Activated naive CD4-positive, alpha-beta T cell treated with anti-CD3 and anti-CD28 coated beads for 36 hours (primary cell): ENCODE measurements at regions of chr7 and their contacts with region 1.

Region 1: DNA sequence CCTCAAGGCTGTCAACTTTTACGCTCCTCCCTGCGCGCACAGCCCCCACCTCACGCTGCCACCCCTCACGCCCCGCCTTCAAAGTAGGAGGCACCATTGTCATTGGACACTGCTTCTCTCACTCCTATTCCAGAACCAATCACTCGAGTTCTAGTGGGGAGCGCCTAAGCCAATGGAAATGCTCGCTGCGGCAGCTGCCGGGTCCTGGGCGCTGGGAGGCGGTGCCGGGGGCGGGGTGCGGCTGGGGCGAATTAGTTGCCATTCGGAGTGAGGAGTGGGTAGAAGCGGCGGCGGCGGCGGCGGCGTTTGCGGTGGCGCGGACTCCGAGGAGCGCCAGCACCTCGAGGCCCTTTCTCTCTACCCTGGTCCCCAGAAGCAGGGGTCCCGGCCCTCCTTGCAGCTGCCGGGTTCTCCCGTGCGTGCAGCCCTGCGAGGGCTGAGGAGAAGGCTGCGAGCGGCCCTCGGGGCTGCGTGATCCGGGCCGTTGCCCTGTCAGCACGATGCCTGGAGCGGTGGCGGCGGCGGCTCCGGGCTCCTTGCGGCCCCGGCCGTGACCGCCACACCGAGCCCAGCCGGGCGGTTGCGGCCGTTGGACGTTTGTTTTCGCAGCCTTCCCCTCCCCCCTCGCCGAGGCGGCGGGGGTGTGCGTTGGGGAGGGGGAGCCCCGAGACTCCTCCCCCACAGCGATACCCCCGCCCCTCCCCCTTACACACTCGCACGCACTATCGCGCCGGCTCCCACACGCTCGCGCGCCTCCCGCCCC is at the start of gene GLCCI1:
- DNase-seq: peak; percentile 98
- H3K4me3 Mint-ChIP-seq: peak within 1 kb of the TSS; percentile 90
- H3K27ac Mint-ChIP-seq: peak within 1 kb of the TSS; percentile 92
- H3K4me1 Mint-ChIP-seq: peaks cover 29% of the 10 kb centered on the region
- H3K27me3 Mint-ChIP-seq: no peaks in the 10 kb centered on the region
- total RNA-seq, gene GLCCI1: 12.9 to 13.3 TPM

Region 2: DNA sequence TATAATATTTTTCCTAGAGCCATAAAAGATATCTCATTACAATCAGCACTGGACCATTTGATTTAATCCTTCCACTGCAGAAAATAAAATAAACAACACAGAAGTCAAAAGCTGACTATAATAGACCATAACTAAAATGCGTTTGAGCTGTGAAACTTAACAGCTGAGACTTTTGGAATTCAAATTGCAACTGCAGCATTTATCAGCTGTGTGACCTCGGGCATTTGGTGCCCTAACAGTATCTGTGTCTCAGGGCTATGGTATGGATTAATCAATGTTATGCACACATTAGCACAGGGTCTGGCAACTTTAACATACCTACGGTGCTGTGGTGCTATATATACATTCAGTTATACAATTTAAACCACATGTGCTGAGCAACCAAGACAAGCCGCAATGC is 593.2 kb before region 1 on chr7:
- CTCF ChIA-PET with region 1: no interaction called
- intact Hi-C with region 1: no loop called
- DNase-seq: no peak
- H3K4me3 Mint-ChIP-seq: no peak overlapping the region
- H3K27ac Mint-ChIP-seq: no peak overlapping the region
- H3K4me1 Mint-ChIP-seq: no peaks in the 10 kb centered on the region
- H3K27me3 Mint-ChIP-seq: no peaks in the 10 kb centered on the region

Region 3: DNA sequence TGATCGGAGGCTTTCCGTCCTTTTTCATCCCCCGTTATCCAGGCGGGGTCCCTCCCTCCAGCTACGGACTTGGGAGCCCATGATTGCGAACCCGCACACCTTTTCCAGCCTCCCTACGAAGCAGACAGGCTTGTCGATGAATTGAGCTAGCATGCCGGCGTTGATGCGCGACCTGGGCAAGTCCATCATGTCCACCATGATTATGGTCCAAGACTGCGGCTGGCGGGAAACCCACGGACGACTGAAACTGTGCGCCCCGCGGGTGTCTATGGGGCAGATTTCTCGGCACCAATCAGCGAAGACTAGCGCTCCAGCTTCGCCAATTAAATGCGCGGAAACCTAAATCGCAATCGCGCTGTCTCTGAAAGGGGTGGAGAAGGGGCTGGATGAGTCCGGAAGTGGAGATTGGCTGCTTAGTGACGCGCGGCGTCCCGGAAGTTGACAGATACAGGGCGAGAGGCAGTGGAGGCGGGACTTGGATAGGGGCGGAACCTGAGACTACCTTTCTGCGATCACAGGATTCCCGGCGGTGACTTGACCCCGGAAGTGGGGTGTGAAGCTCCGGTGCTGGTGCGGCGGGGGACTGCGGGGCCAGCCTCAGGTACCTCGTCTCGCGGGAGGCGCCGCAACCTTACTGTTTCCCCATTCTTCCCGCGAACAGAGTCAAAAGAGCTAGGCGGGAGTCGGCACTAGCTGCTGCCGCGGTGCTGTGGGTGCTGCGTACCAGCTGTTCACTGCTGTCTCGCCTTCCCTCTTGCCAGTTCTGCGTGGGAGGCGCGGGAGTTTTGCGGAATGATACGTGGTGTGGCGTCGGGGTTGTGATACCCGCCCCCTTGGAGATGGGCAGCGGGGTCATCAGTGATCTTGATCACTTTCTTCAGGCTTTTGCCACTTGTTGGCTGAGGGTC is 328.2 kb before region 1 on chr7 and contains the start of gene UMAD1:
- CTCF ChIA-PET with region 1: no interaction called
- intact Hi-C with region 1: loop called (anchors 1 kb)
- DNase-seq: peak; percentile 99
- H3K4me3 Mint-ChIP-seq: peak within 1 kb of the TSS; percentile 92
- H3K27ac Mint-ChIP-seq: peak within 1 kb of the TSS; percentile 98
- H3K4me1 Mint-ChIP-seq: peaks cover 41% of the 10 kb centered on the region
- H3K27me3 Mint-ChIP-seq: no peaks in the 10 kb centered on the region
- total RNA-seq, gene UMAD1: 13.8 to 14.3 TPM

Region 4: GRCh38 chr7:7772397-7772821 is 196.3 kb before region 1 on chr7:
- CTCF ChIA-PET with region 1: interaction called, 3 read pairs
- intact Hi-C with region 1: loop called (anchors 1 kb)
- DNase-seq: peak; percentile 53
- H3K4me3 Mint-ChIP-seq: peak overlapping the region; percentile 69
- H3K27ac Mint-ChIP-seq: no peak overlapping the region
- H3K4me1 Mint-ChIP-seq: peaks cover 28% of the 10 kb centered on the region
- H3K27me3 Mint-ChIP-seq: no peaks in the 10 kb centered on the region

Region 5: DNA sequence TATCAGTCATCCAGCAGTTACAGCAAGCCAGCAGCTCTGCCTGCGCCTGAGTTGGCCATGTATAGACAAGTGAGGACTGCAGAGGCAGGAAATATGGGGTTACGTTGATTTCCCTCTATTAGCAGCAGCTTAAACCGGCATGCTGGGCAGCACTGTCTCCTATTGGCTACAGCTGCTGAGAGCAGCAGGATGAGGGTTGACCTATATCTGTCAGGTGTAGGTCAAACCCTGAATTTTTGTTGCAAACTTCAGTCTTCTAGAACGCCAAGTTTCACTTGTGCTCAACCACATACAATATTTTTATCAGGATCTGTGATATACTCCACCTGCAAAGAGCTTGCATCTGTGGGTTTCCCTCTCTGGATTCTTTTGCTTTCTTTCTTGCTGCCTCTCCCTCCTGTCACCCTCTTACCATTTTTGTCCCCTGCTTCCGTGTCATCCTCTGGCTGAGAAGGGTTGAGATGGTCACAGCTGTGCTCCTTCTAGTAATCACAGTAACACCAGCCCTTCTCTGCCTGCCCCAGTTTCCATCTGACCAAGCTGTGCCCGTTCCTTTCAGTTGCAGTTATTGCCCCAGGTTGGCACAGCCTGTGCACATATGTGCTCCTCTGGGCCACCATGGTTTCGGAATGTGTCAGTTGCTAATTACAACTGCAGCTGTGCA is 24.0 kb before region 1 on chr7:
- CTCF ChIA-PET with region 1: no interaction called
- intact Hi-C with region 1: loop called (anchors 1 kb)
- DNase-seq: peak; percentile 75
- H3K4me3 Mint-ChIP-seq: peak overlapping the region; percentile 41
- H3K27ac Mint-ChIP-seq: peak overlapping the region; percentile 18
- H3K4me1 Mint-ChIP-seq: peaks cover 16% of the 10 kb centered on the region
- H3K27me3 Mint-ChIP-seq: no peaks in the 10 kb centered on the region

Region 6: DNA sequence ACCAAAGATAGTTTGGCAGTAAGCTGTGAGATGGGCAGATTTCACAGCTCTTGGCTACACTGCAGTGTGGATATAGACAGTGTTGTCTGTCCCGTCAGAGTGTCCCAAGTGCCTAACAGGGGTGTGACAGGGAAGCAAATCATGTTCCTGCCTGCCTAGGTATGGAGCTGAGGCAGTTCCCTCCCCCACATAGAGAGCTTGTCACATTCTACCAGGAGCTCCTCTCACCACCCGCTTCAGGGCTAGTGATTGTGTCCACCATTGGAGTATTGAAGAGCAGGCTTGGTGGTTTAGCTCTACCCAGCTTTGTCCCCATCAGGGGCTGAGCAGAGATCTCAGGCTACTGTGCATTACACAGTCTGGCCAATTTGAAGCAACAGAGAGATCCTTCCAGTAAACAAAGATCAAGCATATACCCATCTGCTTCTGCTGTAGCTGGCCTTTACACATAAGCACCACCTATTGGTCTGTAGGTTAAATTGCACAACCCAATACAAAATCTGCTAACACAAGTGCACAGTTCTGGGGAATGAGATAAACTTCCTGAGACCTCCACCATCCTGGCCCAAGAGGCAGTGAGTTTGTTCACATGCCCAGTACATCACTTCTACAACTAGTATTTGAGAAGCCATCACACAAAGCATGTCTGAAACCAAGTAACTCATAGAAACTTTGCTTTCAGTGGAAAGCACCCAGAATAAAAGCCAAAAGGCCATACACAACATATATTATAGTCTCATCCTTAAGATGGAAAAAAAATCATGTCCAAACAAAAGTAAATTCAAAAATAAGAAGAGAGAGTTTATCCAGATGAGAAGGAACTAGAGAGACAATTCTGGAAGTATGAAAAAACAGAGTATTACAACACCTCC is 67.2 kb after region 1 on chr7:
- CTCF ChIA-PET with region 1: interaction called, 4 read pairs
- intact Hi-C with region 1: loop called (anchors 1 kb)
- DNase-seq: no peak
- H3K4me3 Mint-ChIP-seq: no peak overlapping the region
- H3K27ac Mint-ChIP-seq: no peak overlapping the region
- H3K4me1 Mint-ChIP-seq: peaks cover 20% of the 10 kb centered on the region
- H3K27me3 Mint-ChIP-seq: no peaks in the 10 kb centered on the region

Region 7: DNA sequence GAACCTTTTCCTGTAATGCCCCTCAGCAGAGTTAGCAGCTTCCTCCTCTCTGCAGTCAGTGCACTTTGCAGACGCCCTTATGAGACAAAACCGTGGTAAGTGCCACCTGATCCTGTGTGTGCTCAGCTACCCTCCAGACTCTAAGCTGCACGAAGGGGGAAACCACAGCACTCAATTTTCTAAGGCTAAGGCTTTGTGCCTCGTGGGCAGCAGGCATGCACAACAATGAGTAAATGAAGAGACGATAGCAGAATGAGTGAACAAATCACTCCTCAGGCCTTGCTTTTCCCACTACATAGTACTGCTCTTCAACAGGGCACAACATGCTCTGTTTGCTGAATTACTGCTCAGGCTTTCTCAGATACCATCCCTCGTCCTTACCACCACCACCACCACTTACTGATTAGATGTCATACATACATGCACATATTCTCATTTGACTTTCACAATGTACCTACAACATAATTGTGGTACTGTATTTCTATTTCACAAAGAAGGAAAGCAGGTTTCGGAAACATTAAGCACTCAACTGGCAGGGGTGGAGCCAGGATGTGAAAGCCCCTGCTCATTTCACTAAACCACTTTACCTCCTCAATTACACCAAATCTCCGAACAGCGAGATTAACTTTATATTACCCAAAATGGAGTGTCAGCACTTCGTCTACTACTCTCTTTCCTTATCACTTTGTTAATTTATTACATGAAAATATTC is 207.8 kb after region 1 on chr7:
- CTCF ChIA-PET with region 1: no interaction called
- intact Hi-C with region 1: loop called (anchors 1 kb)
- DNase-seq: peak; percentile 78
- H3K4me3 Mint-ChIP-seq: peak overlapping the region; percentile 47
- H3K27ac Mint-ChIP-seq: peak overlapping the region; percentile 83
- H3K4me1 Mint-ChIP-seq: peaks cover 43% of the 10 kb centered on the region
- H3K27me3 Mint-ChIP-seq: no peaks in the 10 kb centered on the region